Activated B cell treated with CpG ODN at 0.5 μM for 24 hours (primary cell): ENCODE measurements at regions of chr17 and their contacts with region 1.

Region 1: DNA sequence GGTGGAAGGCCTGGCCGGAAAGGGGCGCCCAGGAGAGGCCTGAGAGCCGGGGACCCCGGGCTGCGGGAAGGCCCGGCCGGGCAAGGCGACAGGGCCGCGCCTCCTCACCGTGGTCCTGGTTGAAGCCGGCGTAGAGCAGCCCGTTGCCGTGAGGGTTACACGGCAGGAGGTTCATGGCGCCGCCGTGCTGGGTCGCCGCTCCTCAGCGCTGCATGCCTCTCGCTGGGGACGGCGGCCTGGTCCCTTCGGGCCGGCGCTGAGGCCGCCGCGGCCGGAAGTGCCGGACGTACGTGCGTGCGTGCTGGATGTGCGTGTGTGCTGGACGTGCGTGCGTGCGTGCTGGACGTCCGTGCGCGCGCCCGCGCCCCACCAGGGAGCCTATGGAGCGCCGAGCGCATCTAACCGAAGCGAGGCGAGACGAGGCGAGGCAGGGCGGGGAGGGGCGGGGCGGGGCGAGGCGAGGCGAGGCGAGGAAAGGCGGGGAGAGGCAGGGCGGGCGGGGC is at the start of gene WDR45B:
- DNase-seq: peak; percentile 82
- ATAC-seq: peak; percentile 91
- H3K4me3 Mint-ChIP-seq: peak within 1 kb of the TSS; percentile 82
- H3K27ac Mint-ChIP-seq: peak within 1 kb of the TSS; percentile 80
- H3K4me1 Mint-ChIP-seq: peaks cover 23% of the 10 kb centered on the region
- H3K27me3 Mint-ChIP-seq: no peaks in the 10 kb centered on the region
- CTCF ChIP-seq: no peak
- total RNA-seq, gene WDR45B: 48.3 and 51.2 TPM in 2 replicates

Region 2: GRCh38 chr17:82592767-82593589 is 55.2 kb before region 1 on chr17:
- CTCF ChIA-PET with region 1: no interaction called
- POLR2A ChIA-PET with region 1: no interaction called
- intact Hi-C with region 1: loop called (anchors 1 kb)
- DNase-seq: peak; percentile 43
- ATAC-seq: peak; percentile 61
- H3K4me3 Mint-ChIP-seq: peak overlapping the region; percentile 72
- H3K27ac Mint-ChIP-seq: peak overlapping the region; percentile 85
- H3K4me1 Mint-ChIP-seq: peaks cover 51% of the 10 kb centered on the region
- H3K27me3 Mint-ChIP-seq: no peaks in the 10 kb centered on the region
- CTCF ChIP-seq: no peak

Region 3: GRCh38 chr17:82698065-82698973 is 50.1 kb after region 1 on chr17 and contains the start of gene RAB40B:
- CTCF ChIA-PET with region 1: no interaction called
- POLR2A ChIA-PET with region 1: interaction called, 5 read pairs
- intact Hi-C with region 1: loop called (anchors 1 kb)
- DNase-seq: peak; percentile 94
- ATAC-seq: peak; percentile 98
- H3K4me3 Mint-ChIP-seq: peak within 1 kb of the TSS; percentile 82
- H3K27ac Mint-ChIP-seq: no peak within 1 kb of the TSS
- H3K4me1 Mint-ChIP-seq: peaks cover 16% of the 10 kb centered on the region
- H3K27me3 Mint-ChIP-seq: peaks cover 4% of the 10 kb centered on the region
- CTCF ChIP-seq: no peak
- total RNA-seq, gene RAB40B: 2.0 and 2.6 TPM in 2 replicates

Region 4: DNA sequence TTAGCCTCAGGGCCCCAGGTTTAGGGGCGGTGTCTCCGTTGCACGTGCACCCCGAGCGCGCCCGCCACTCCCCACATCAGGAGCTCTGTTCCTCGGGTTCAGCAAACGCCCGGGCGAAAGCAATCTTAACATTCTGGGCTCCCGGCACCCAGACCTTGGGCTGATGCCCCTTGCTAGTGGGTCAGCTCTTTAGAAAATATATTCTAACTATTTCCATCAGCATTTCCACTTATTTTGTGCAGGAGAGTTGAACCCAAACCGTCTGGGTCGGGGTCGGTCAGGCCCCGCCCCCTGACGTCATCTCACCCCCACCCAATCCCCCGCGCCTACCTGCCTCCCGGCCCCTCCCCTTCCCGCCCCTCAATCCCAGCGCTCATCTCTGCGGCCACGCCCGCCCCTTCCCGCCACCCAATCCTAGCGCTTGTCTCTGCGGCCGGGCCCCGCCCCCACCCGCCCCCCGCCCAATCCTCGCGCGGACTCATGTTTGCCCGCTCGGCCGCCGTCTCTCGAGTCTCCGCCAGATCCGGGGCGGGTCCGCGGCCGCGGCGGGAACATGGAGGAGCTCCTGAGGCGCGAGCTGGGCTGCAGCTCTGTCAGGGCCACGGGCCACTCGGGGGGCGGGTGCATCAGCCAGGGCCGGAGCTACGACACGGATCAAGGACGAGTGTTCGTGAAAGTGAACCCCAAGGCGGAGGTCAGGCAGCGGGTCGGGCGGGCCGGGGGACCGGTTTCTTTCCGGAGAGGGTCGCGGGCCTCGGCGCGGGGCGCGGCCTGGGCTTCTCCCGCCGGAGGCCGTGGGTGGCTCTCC is 68.2 kb after region 1 on chr17 and contains the start of gene FN3KRP:
- CTCF ChIA-PET with region 1: no interaction called
- POLR2A ChIA-PET with region 1: no interaction called
- intact Hi-C with region 1: loop called (anchors 1 kb)
- DNase-seq: peak; percentile 78
- ATAC-seq: peak; percentile 95
- H3K4me3 Mint-ChIP-seq: peak within 1 kb of the TSS; percentile 96
- H3K27ac Mint-ChIP-seq: peak within 1 kb of the TSS; percentile 87
- H3K4me1 Mint-ChIP-seq: peaks cover 22% of the 10 kb centered on the region
- H3K27me3 Mint-ChIP-seq: no peaks in the 10 kb centered on the region
- CTCF ChIP-seq: no peak
- total RNA-seq, gene FN3KRP: 26.7 and 28.5 TPM in 2 replicates

Region 5: DNA sequence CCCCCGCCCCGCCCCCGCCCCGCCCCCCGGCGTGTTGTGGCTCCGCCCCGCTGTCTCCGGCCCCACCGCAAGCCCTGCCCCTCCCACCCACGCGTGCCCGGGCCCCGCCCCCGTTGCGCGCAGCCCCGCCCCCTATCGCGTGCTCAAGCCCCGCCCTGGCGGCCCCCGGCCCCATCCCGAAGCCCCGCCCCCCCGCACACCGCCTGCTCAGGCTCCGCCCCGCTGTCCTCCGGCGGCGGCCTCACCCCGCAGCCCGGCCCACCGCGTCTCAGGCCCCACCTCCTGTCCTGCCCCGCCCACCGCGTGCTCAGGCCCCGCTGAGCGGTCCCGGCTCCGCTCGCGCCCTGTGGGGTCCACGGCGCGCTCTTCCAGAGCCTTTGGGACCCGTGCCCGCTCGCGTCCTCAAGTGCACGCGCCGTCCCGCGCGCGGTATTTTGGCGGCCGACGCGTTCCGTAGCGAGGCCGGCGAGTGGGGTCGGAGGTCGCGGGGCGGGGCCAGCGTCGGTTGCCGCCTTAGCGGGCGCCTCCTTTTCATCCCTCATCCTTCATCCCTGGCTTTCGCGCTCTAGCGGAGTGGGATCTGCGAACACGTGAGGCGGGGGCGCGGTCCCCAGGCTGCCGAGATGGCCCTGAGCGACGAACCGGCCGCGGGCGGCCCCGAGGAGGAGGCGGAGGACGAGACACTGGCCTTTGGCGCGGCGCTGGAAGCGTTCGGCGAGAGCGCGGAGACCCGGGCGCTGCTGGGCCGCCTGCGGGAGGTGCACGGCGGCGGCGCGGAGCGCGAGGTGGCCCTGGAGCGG is 103.6 kb after region 1 on chr17 and contains the start of gene TBCD:
- CTCF ChIA-PET with region 1: no interaction called
- POLR2A ChIA-PET with region 1: no interaction called
- intact Hi-C with region 1: loop called (anchors 1 kb)
- DNase-seq: peak; percentile 86
- ATAC-seq: peak; percentile 88
- H3K4me3 Mint-ChIP-seq: peak within 1 kb of the TSS; percentile 84
- H3K27ac Mint-ChIP-seq: no peak within 1 kb of the TSS
- H3K4me1 Mint-ChIP-seq: peaks cover 22% of the 10 kb centered on the region
- H3K27me3 Mint-ChIP-seq: no peaks in the 10 kb centered on the region
- CTCF ChIP-seq: no peak
- total RNA-seq, gene TBCD: 49.9 and 50.9 TPM in 2 replicates

Region 6: DNA sequence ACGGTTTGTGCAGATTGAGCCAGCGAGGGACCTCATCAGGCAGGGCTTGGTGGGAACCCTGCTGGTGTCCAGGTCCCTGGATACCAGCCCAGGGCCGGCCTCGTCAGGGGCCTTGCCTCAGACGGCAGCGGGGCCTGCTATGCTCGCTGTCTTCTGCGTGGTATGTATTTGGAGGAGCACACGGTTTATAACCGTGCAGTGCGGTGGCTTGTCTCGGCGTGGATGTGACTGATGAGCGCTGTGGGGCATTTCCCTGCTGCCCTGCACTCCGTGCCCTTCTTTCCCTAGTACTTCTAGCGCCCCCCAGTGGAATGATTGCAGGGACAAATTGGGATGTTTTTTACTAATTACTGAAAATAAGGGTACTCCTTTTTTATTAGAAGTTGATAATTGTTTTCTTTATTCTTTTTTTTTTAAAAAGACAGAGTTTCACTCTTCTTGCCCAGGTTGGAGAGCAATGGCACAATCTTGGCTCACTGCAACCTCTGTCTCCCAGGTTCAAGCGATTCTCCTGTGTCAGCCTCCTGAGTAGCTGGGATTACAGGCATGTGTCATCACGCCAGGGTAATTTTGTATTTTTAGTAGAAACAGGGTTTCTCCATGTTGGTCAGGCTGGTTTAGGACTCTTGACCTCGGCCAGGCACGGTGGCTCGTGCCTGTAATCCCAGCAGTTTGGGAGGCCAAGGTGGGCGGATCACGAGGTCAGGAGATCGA is 119.0 kb after region 1 on chr17:
- CTCF ChIA-PET with region 1: no interaction called
- POLR2A ChIA-PET with region 1: no interaction called
- intact Hi-C with region 1: loop called (anchors 5 kb)
- DNase-seq: no peak
- ATAC-seq: no peak
- H3K4me3 Mint-ChIP-seq: no peak overlapping the region
- H3K27ac Mint-ChIP-seq: no peak overlapping the region
- H3K4me1 Mint-ChIP-seq: peaks cover 12% of the 10 kb centered on the region
- H3K27me3 Mint-ChIP-seq: no peaks in the 10 kb centered on the region
- CTCF ChIP-seq: no peak

Region 7: GRCh38 chr17:83051395-83052233 is 403.4 kb after region 1 on chr17:
- CTCF ChIA-PET with region 1: no interaction called
- POLR2A ChIA-PET with region 1: no interaction called
- intact Hi-C with region 1: loop called (anchors 1 kb)
- DNase-seq: peak; percentile 97
- ATAC-seq: peak; percentile 85
- H3K4me3 Mint-ChIP-seq: peak overlapping the region; percentile 79
- H3K27ac Mint-ChIP-seq: peak overlapping the region; percentile 78
- H3K4me1 Mint-ChIP-seq: peaks cover 31% of the 10 kb centered on the region
- H3K27me3 Mint-ChIP-seq: no peaks in the 10 kb centered on the region
- CTCF ChIP-seq: no peak